ENCODE measurements at regions of chr2 and their contacts with region 1.

Region 1: GRCh38 chr2:162297925-162298552 is 20.4 kb downstream of the IFIH1 start:
- DNase-seq: peak in 2 of 4 donors; percentile 60 to 82
- ATAC-seq: peak; percentile 82
- H3K4me3 ChIP-seq: no peak overlapping the region
- H3K27ac ChIP-seq: no peak overlapping the region
- H3K4me1 ChIP-seq: peaks cover 0 to 12% of the 10 kb centered on the region in 2 donors
- H3K27me3 ChIP-seq: no peaks in the 10 kb centered on the region
- CTCF ChIP-seq: peak; percentile 76 to 87

Region 2: DNA sequence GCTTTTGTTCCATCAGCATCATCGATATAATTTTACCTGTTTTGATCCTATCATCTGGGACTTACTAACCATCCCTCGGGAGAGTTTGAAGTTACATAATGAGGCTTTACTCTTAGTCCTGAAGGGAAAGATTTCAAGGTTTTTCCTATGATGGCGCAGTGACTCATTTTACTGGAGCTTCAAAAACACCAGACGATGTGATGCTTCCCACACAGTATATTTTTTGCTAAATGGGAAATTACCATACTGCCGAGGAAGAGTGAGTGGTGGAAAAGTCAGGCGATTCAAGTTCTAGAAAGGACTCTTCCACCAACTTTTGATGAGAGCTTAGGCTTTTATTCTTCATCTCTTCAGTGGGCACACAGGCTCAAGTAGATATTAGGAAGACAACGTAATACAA is 101.4 kb before region 1 on chr2:
- intact Hi-C with region 1: no loop called
- DNase-seq: no peak
- ATAC-seq: no peak
- H3K4me3 ChIP-seq: no peak overlapping the region
- H3K27ac ChIP-seq: no peak overlapping the region
- H3K4me1 ChIP-seq: no peaks in the 10 kb centered on the region
- H3K27me3 ChIP-seq: no peaks in the 10 kb centered on the region
- CTCF ChIP-seq: no peak

Region 3: GRCh38 chr2:162221064-162221463 is 77.0 kb before region 1 on chr2:
- intact Hi-C with region 1: loop called in 1 of 2 experiments (anchors 5 kb)
- DNase-seq: peak in 3 of 4 donors; percentile 49 to 91 (median 74)
- ATAC-seq: peak; percentile 97
- H3K4me3 ChIP-seq: no peak overlapping the region
- H3K27ac ChIP-seq: no peak overlapping the region
- H3K4me1 ChIP-seq: peaks cover 0 to 6% of the 10 kb centered on the region in 2 donors
- H3K27me3 ChIP-seq: no peaks in the 10 kb centered on the region
- CTCF ChIP-seq: peak; percentile 78 to 82